PC-9 (cell line): ENCODE measurements at regions of chr2 and their contacts with region 1.

Region 1: DNA sequence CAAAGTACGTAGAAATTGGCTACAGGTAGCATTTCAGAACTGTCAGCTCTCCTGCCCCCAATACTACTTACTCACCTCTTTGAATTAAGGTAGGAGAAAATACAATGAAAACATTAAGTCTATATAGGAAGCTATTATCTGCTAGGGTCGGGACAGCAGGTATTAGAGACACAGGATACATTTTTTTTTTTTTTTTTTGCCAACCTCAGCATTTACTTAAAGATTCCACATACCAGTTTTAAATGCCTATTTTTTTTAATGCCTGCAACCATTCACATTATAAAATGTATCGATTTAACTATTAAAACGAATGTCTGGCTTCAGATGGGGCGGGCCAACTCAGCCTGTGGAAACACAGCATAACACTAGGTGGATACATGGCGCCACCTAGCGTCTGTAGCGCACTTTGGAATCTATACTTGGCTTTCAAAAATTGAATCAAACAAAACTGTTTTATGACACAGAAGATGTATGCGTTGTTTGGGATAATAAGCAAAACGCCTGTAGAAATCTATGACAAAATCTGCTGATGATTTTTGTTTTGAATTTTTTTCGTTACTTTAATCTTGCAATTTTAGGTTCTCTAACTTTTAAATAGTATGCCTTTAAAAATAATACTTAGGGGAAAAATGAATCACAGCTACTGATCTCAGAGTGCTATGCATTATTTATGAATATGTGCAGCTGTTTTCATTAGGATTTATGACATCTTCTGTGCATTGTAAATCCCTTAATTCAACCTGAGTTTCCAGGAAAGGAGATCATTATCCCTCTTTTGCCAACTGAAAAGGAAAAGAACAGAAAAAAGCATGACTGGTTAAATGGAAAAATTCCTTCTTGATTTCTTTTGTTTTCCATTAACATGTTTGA is 261.0 kb downstream of the NYAP2 start:
- DNase-seq: peak; percentile 54 to 78
- H3K4me3 ChIP-seq: no peak overlapping the region
- H3K27ac ChIP-seq: no peak overlapping the region
- H3K4me1 ChIP-seq: no peaks in the 10 kb centered on the region
- H3K27me3 ChIP-seq: no peaks in the 10 kb centered on the region
- CTCF ChIP-seq: peak; percentile 100

Region 2: DNA sequence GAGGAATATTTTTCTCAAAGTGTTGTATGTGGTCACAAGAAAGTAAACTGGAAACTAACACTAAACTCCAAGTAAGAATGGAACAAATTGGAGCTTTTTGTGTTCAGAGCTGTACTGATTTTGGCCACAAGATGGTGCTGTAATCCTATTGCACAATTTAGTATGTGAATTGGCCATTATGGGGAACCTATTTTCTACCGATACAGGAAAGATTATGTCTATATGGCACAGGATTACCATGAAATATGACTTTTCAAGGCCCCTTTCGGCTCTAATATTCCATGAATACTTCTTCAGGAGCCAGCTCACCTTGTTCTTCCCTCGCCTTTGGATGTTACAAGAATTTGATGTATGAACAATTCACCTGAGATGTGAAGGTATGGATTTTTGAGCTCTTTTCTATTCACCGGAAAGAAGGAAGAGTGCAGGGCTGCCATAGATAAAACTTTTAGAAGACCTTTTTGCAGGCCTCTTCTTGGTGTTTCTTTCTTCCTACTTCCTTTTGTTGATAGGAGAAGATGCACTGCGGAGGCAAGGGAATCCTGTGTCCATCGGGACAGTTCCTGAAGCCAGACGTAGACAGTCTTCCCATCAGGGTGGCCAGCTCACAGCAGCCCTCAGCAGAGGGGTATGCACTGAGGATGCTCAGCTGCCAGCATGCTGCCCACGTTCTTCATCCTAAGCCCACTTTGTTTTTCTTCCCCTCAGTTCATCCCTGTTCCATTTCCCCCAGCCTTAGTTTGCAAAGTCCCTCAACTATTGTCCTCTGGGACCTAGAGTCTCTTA is 1690.0 kb before region 1 on chr2:
- CTCF ChIA-PET with region 1: no interaction called
- POLR2A ChIA-PET with region 1: no interaction called
- intact Hi-C with region 1: loop called (anchors 1 kb)
- DNase-seq: peak; percentile 64 to 65
- H3K4me3 ChIP-seq: no peak overlapping the region
- H3K27ac ChIP-seq: no peak overlapping the region
- H3K4me1 ChIP-seq: no peaks in the 10 kb centered on the region
- H3K27me3 ChIP-seq: no peaks in the 10 kb centered on the region
- CTCF ChIP-seq: peak; percentile 100

Region 3: DNA sequence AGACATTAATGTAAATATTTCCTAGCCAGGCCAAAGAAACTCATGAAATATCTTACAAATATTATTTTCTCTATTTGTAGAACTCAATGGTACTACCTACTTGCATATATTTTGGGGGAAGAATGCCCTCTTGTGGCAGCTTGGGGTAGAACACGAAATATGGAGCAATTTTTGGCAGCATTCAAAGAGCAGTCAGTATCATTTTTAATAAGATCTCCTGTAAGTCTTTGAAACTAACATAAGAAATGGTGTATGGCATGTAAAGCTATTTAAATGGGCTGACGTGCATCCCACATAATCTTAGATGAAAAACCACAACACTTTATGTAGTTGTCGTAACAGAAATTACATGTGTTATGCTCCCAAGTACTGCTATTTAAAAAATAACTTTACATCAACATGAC is 882.0 kb before region 1 on chr2:
- CTCF ChIA-PET with region 1: interaction called, 9 read pairs
- POLR2A ChIA-PET with region 1: no interaction called
- intact Hi-C with region 1: loop called (anchors 2 kb)
- DNase-seq: peak; percentile 67 to 75
- H3K4me3 ChIP-seq: no peak overlapping the region
- H3K27ac ChIP-seq: no peak overlapping the region
- H3K4me1 ChIP-seq: peaks cover 2% of the 10 kb centered on the region
- H3K27me3 ChIP-seq: no peaks in the 10 kb centered on the region
- CTCF ChIP-seq: peak; percentile 99

Region 4: GRCh38 chr2:225010804-225011203 is 649.7 kb before region 1 on chr2:
- CTCF ChIA-PET with region 1: no interaction called
- POLR2A ChIA-PET with region 1: no interaction called
- intact Hi-C with region 1: loop called (anchors 2 kb)
- DNase-seq: peak in 1 of 2 experiments; percentile 59
- H3K4me3 ChIP-seq: 0 out of 2 replicates have a peak overlapping the region, but pooled peaks have one; percentile 0
- H3K27ac ChIP-seq: peak overlapping the region; percentile 26
- H3K4me1 ChIP-seq: peaks cover 14% of the 10 kb centered on the region
- H3K27me3 ChIP-seq: no peaks in the 10 kb centered on the region
- CTCF ChIP-seq: no peak

Region 5: GRCh38 chr2:225464346-225465025 is 196.0 kb before region 1 on chr2:
- CTCF ChIA-PET with region 1: no interaction called
- POLR2A ChIA-PET with region 1: no interaction called
- intact Hi-C with region 1: loop called (anchors 5 kb)
- DNase-seq: no peak
- H3K4me3 ChIP-seq: peak overlapping the region; percentile 26; the same call in 1 of the 2 replicates
- H3K27ac ChIP-seq: no peak overlapping the region
- H3K4me1 ChIP-seq: 0 out of 2 replicates have a peak, but pooled peaks cover 7% of the 10 kb centered on the region
- H3K27me3 ChIP-seq: no peaks in the 10 kb centered on the region
- CTCF ChIP-seq: no peak

Region 6: GRCh38 chr2:226932443-226932842 is 1271.9 kb after region 1 on chr2:
- CTCF ChIA-PET with region 1: interaction called, 12 read pairs
- POLR2A ChIA-PET with region 1: no interaction called
- intact Hi-C with region 1: no loop called
- DNase-seq: no peak
- H3K4me3 ChIP-seq: no peak overlapping the region
- H3K27ac ChIP-seq: no peak overlapping the region
- H3K4me1 ChIP-seq: no peaks in the 10 kb centered on the region
- H3K27me3 ChIP-seq: no peaks in the 10 kb centered on the region
- CTCF ChIP-seq: no peak